Gastrocnemius medialis (tissue), 4 donors: ENCODE measurements at regions of chr12 and their contacts with region 1.

Region 1: DNA sequence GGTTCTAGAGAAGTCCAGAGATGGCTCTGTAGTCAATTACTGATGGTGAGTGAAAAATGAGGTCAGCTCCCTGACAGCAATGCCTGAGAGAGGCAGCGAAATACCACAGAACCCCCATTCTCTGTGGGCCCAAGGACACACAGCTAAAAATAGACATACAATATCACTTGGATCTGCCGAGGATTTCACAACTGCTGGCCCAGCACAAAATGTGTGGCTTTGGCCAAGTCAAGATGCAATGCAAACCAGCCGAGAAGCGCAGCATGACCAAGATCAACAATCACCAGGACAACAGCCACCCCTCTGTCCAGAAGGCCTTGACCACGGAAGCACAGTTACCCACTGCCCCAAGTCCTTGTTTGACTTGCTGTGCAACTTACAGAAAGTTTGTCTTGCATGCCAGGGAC is 52.2 kb downstream of the CKAP4 start:
- DNase-seq: peak; percentile 84 to 89
- ATAC-seq: peak; percentile 89 to 97
- H3K4me3 ChIP-seq: no peak overlapping the region
- H3K27ac ChIP-seq: peak overlapping the region; percentile 74 to 82 (median 77)
- H3K4me1 ChIP-seq: peaks cover 50 to 57% of the 10 kb centered on the region in 2 donors
- H3K27me3 ChIP-seq: no peaks in the 10 kb centered on the region
- CTCF ChIP-seq: no peak
- POLR2A ChIP-seq: no peak

Region 2: GRCh38 chr12:106149096-106149784 is 46.4 kb before region 1 on chr12:
- in situ Hi-C with region 1: no loop called
- intact Hi-C with region 1: loop called (anchors 5 kb)
- DNase-seq: peak in 1 of 2 donors; percentile 46
- ATAC-seq: peak; percentile 23 to 36
- H3K4me3 ChIP-seq: no peak overlapping the region
- H3K27ac ChIP-seq: peak overlapping the region in 3 of 4 donors; percentile 79 to 80 (median 80)
- H3K4me1 ChIP-seq: peaks cover 38 to 56% of the 10 kb centered on the region in 2 donors
- H3K27me3 ChIP-seq: no peaks in the 10 kb centered on the region
- CTCF ChIP-seq: peak; percentile 50 to 74 (median 59)
- POLR2A ChIP-seq: no peak